ENCODE measurements at regions of chr4 and their contacts with region 1.

Region 1: GRCh38 chr4:143513306-143514168 is at the start of gene SMARCA5:
- DNase-seq: peak; percentile 98 to 99 (median 99)
- H3K4me3 ChIP-seq: peak within 1 kb of the TSS; percentile 80 to 91 (median 91)
- H3K4me3 Mint-ChIP-seq: peak within 1 kb of the TSS; percentile 97 to 99
- H3K27ac ChIP-seq: peak within 1 kb of the TSS; percentile 93 to 97
- H3K27ac Mint-ChIP-seq: peak within 1 kb of the TSS; percentile 99 to 100 (median 100)
- H3K4me1 ChIP-seq: peaks cover 23 to 26% of the 10 kb centered on the region in 2 donors
- H3K4me1 Mint-ChIP-seq: peaks cover 27% of the 10 kb centered on the region
- H3K27me3 ChIP-seq: no peaks in the 10 kb centered on the region
- H3K27me3 Mint-ChIP-seq: peaks cover 0 to 3% (median 0%) of the 10 kb centered on the region in 3 donors
- CTCF ChIP-seq: no peak
- polyA plus RNA-seq, gene SMARCA5: 5.6 to 19.4 (median 12.6) TPM

Region 2: GRCh38 chr4:143184217-143185116 is 329.1 kb before region 1 on chr4 and contains the start of gene USP38:
- intact Hi-C with region 1: loop called (anchors 5 kb)
- DNase-seq: peak; percentile 93 to 98 (median 93)
- H3K4me3 ChIP-seq: peak within 1 kb of the TSS; percentile 75 to 89 (median 85)
- H3K4me3 Mint-ChIP-seq: peak within 1 kb of the TSS; percentile 98 to 99
- H3K27ac ChIP-seq: peak within 1 kb of the TSS; percentile 80 to 96
- H3K27ac Mint-ChIP-seq: peak within 1 kb of the TSS; percentile 93 to 99 (median 95)
- H3K4me1 ChIP-seq: peaks cover 37 to 54% of the 10 kb centered on the region in 2 donors
- H3K4me1 Mint-ChIP-seq: peaks cover 42% of the 10 kb centered on the region
- H3K27me3 ChIP-seq: no peaks in the 10 kb centered on the region
- H3K27me3 Mint-ChIP-seq: peaks cover 0 to 2% (median 0%) of the 10 kb centered on the region in 3 donors
- CTCF ChIP-seq: no peak
- polyA plus RNA-seq, gene USP38: 7.3 to 19.3 (median 12.4) TPM

Region 3: DNA sequence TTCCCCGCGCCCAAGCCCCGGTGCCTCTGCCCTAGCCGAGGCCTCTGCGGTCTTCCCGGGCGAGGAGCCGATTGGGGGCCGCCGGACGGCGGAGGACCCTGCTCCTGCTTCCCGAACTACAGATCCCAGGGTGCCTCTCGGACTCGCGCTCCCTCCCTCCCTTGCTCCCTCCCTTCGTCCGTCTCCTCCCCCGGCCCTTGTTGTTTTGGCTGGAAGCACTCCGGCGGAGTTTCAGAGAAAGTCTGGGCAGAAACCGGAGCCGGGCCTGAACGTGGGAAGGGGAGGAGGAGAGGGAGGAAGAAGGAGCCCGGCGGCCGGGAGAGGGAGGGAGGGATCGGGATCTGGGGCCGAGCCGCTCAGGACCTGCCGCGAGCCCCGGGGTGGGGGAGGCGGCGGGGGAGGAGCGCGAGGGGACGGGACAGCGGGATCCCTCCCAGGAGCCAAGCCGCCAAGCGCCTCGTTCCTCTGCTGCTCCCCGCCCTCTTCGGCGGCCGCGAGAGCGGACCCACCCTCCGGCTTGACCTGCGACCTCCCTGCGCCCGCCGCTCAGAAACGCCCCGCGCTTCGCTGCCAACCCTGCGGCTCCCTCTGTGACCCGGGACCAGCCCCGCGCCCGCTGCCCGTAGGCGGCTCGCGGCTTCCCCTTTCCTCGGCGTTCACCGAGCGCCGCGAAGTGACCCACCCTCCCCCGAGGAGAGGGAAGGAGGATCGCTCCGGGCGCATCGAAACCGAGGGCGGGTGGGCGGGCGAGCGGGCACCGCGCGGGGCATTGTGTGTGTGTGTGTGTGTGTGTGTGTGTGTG is 177.4 kb before region 1 on chr4:
- intact Hi-C with region 1: loop called (anchors 5 to 10 kb)
- DNase-seq: peak; percentile 65 to 78 (median 73)
- H3K4me3 ChIP-seq: peak overlapping the region; percentile 65 to 98 (median 93)
- H3K4me3 Mint-ChIP-seq: peak overlapping the region; percentile 99 to 100
- H3K27ac ChIP-seq: peak overlapping the region; percentile 86 to 91
- H3K27ac Mint-ChIP-seq: peak overlapping the region; percentile 71 to 93 (median 89)
- H3K4me1 ChIP-seq: peaks cover 27 to 35% of the 10 kb centered on the region in 2 donors
- H3K4me1 Mint-ChIP-seq: peaks cover 37% of the 10 kb centered on the region
- H3K27me3 ChIP-seq: no peaks in the 10 kb centered on the region
- H3K27me3 Mint-ChIP-seq: peaks cover 0 to 3% (median 2%) of the 10 kb centered on the region in 3 donors
- CTCF ChIP-seq: no peak

Region 4: GRCh38 chr4:143346206-143346605 is 167.3 kb before region 1 on chr4:
- intact Hi-C with region 1: loop called in 1 of 2 experiments (anchors 10 kb)
- DNase-seq: no peak
- H3K4me3 ChIP-seq: no peak overlapping the region
- H3K4me3 Mint-ChIP-seq: no peak overlapping the region
- H3K27ac ChIP-seq: no peak overlapping the region
- H3K27ac Mint-ChIP-seq: peak overlapping the region in 1 of 7 donors; percentile 27
- H3K4me1 ChIP-seq: no peaks in the 10 kb centered on the region
- H3K4me1 Mint-ChIP-seq: no peaks in the 10 kb centered on the region
- H3K27me3 ChIP-seq: no peaks in the 10 kb centered on the region
- H3K27me3 Mint-ChIP-seq: peaks cover 0 to 3% (median 0%) of the 10 kb centered on the region in 3 donors
- CTCF ChIP-seq: no peak

Region 5: DNA sequence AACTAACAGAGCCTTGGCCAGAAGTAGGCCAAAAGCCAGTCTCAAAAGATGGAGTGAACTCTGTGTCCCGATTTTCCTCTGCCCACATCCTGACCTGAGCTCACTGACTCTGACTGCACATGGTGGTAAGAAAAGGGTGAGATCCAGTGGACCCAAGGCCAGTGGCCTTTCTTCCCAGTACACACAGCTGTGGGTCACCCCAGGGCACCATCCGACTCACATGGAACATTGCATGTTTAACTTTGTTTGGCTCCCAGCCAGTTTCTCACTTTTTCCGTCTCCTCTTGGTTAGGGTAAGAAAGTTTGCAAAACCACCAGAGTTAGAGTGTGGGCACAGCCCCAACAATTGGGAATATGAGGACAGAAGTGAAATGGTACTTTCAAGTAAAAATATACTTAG is 107.0 kb before region 1 on chr4:
- intact Hi-C with region 1: no loop called
- DNase-seq: no peak
- H3K4me3 ChIP-seq: no peak overlapping the region
- H3K4me3 Mint-ChIP-seq: no peak overlapping the region
- H3K27ac ChIP-seq: no peak overlapping the region
- H3K27ac Mint-ChIP-seq: peak overlapping the region in 1 of 7 donors; percentile 3
- H3K4me1 ChIP-seq: peaks cover 17 to 26% of the 10 kb centered on the region in 2 donors
- H3K4me1 Mint-ChIP-seq: peaks cover 33% of the 10 kb centered on the region
- H3K27me3 ChIP-seq: no peaks in the 10 kb centered on the region
- H3K27me3 Mint-ChIP-seq: no peaks in the 10 kb centered on the region
- CTCF ChIP-seq: no peak

Region 6: DNA sequence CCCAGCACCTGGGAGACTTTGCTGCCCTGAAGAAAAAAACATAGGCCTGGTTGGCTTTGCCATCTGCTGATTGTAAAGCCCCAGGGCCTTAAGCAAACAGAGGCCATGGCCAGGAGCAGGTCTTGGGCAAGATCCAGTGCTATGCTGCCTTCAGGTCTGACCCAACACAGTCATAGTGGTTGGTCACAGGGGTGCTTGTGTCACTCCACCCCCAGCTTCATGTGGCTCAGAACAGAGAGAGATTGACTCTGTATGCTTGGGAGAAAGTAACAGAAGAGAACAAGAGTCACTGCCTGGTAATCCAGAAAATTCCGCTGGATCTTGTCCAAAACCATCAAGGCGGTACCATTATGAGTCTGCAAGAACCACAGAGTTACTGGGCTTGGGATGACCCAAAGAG is 24.4 kb before region 1 on chr4:
- intact Hi-C with region 1: no loop called
- DNase-seq: no peak
- H3K4me3 ChIP-seq: no peak overlapping the region
- H3K4me3 Mint-ChIP-seq: no peak overlapping the region
- H3K27ac ChIP-seq: no peak overlapping the region
- H3K27ac Mint-ChIP-seq: no peak overlapping the region
- H3K4me1 ChIP-seq: no peaks in the 10 kb centered on the region
- H3K4me1 Mint-ChIP-seq: no peaks in the 10 kb centered on the region
- H3K27me3 ChIP-seq: no peaks in the 10 kb centered on the region
- H3K27me3 Mint-ChIP-seq: peaks cover 0 to 7% (median 3%) of the 10 kb centered on the region in 3 donors
- CTCF ChIP-seq: no peak

Region 7: GRCh38 chr4:145097821-145098674 is 1584.5 kb after region 1 on chr4 and contains the starts of genes ABCE1 and ANAPC10:
- intact Hi-C with region 1: loop called in 1 of 2 experiments (anchors 10 kb)
- DNase-seq: peak; percentile 95 to 98 (median 98)
- H3K4me3 ChIP-seq: peak within 1 kb of the TSS; percentile 71 to 84 (median 84)
- H3K4me3 Mint-ChIP-seq: peak within 1 kb of the TSS; percentile 91 to 98
- H3K27ac ChIP-seq: peak within 1 kb of the TSS; percentile 95 to 98
- H3K27ac Mint-ChIP-seq: peak within 1 kb of the TSS; percentile 93 to 100 (median 99)
- H3K4me1 ChIP-seq: peaks cover 28 to 36% of the 10 kb centered on the region in 2 donors
- H3K4me1 Mint-ChIP-seq: peaks cover 25% of the 10 kb centered on the region
- H3K27me3 ChIP-seq: no peaks in the 10 kb centered on the region
- H3K27me3 Mint-ChIP-seq: no peaks in the 10 kb centered on the region
- CTCF ChIP-seq: no peak
- polyA plus RNA-seq, gene ABCE1: 22.1 to 25.0 (median 23.7) TPM
- polyA plus RNA-seq, gene ANAPC10: 11.1 to 25.4 (median 21.3) TPM

Measured in CD14-positive monocyte (primary cell).